Psoas muscle (tissue), 8 donors: ENCODE measurements at regions of chr9 and their contacts with region 1.

Region 1: GRCh38 chr9:13351778-13352386 is 72.4 kb upstream of the MPDZ start:
- DNase-seq: no peak
- ATAC-seq: peak in 2 of 4 donors; percentile 46 to 63
- H3K4me3 ChIP-seq: no peak overlapping the region
- H3K27ac ChIP-seq: no peak overlapping the region
- H3K4me1 ChIP-seq: no peaks in the 10 kb centered on the region
- H3K27me3 ChIP-seq: no peaks in the 10 kb centered on the region
- CTCF ChIP-seq: peak; percentile 74

Region 2: GRCh38 chr9:13266167-13266566 is 85.7 kb before region 1 on chr9:
- intact Hi-C with region 1: no loop called
- DNase-seq: no peak
- ATAC-seq: peak in 3 of 4 donors; percentile 39 to 60 (median 40)
- H3K4me3 ChIP-seq: no peak overlapping the region
- H3K27ac ChIP-seq: peak overlapping the region; percentile 36
- H3K4me1 ChIP-seq: peaks cover 42% of the 10 kb centered on the region
- H3K27me3 ChIP-seq: no peaks in the 10 kb centered on the region
- CTCF ChIP-seq: no peak

Region 3: DNA sequence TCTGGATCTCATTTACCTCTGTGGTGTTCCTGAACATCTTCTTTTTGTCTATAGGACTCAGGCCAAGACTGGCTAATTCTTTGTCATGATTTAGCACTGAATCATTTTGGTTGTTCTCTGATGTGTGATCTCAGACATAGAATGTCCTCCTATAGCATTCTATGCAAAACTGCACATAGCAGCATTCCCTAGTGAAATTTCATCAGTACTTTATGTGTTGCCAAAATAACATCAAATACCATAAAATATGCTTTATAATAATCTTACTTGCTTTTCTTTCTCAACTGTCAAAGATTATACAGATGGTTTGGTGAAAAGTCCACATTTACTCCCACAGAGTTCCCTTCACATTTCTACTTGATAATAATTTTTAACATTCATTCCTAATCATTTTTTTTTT is 43.3 kb after region 1 on chr9:
- intact Hi-C with region 1: no loop called
- DNase-seq: no peak
- ATAC-seq: no peak
- H3K4me3 ChIP-seq: no peak overlapping the region
- H3K27ac ChIP-seq: no peak overlapping the region
- H3K4me1 ChIP-seq: no peaks in the 10 kb centered on the region
- H3K27me3 ChIP-seq: no peaks in the 10 kb centered on the region
- CTCF ChIP-seq: no peak

Region 4: GRCh38 chr9:14358523-14358922 is 1006.6 kb after region 1 on chr9:
- intact Hi-C with region 1: loop called in 1 of 2 experiments (anchors 5 kb)
- DNase-seq: no peak
- ATAC-seq: no peak
- H3K4me3 ChIP-seq: no peak overlapping the region
- H3K27ac ChIP-seq: no peak overlapping the region
- H3K4me1 ChIP-seq: no peaks in the 10 kb centered on the region
- H3K27me3 ChIP-seq: no peaks in the 10 kb centered on the region
- CTCF ChIP-seq: no peak

Region 5: GRCh38 chr9:14428781-14429230 is 1076.9 kb after region 1 on chr9:
- intact Hi-C with region 1: loop called in 1 of 2 experiments (anchors 5 kb)
- DNase-seq: peak; percentile 67 to 73
- ATAC-seq: peak; percentile 58 to 84 (median 67)
- H3K4me3 ChIP-seq: no peak overlapping the region
- H3K27ac ChIP-seq: no peak overlapping the region
- H3K4me1 ChIP-seq: peaks cover 16% of the 10 kb centered on the region
- H3K27me3 ChIP-seq: no peaks in the 10 kb centered on the region
- CTCF ChIP-seq: peak; percentile 77